CD8-positive, alpha-beta T cell (primary cell): ENCODE measurements at regions of chr7 and their contacts with region 1.

Region 1: GRCh38 chr7:87574630-87575029 is 26.1 kb downstream of the ABCB1 start:
- DNase-seq: no peak
- ATAC-seq: no peak
- H3K4me3 ChIP-seq: no peak overlapping the region
- H3K4me3 Mint-ChIP-seq: no peak overlapping the region
- H3K27ac ChIP-seq: no peak overlapping the region
- H3K27ac Mint-ChIP-seq: no peak overlapping the region
- H3K4me1 ChIP-seq: no peaks in the 10 kb centered on the region
- H3K4me1 Mint-ChIP-seq: peaks cover 15% of the 10 kb centered on the region
- H3K27me3 ChIP-seq: no peaks in the 10 kb centered on the region
- H3K27me3 Mint-ChIP-seq: no peaks in the 10 kb centered on the region
- CTCF ChIP-seq: no peak

Region 2: DNA sequence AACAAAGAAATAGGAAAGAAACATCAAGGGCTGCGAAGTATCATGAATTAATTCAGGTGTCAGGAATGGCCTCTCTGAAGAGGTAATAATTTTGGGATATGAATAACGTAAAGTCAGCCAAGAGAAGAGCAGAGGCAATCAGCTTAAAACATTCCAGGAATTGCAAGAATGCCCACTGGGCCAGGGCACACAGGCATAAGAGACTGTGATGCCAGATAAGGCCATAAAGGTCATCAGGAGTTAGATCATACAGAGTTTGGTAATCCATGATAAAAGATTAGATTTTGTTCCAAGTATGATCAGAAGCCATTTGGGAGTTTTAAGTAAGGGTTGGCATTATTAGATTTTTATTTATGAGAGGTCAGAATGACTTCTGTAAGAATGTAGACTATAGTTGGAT is 45.9 kb before region 1 on chr7:
- CTCF ChIA-PET with region 1: no interaction called
- POLR2A ChIA-PET with region 1: no interaction called
- intact Hi-C with region 1: no loop called
- DNase-seq: no peak
- ATAC-seq: no peak
- H3K4me3 ChIP-seq: no peak overlapping the region
- H3K4me3 Mint-ChIP-seq: no peak overlapping the region
- H3K27ac ChIP-seq: no peak overlapping the region
- H3K27ac Mint-ChIP-seq: no peak overlapping the region
- H3K4me1 ChIP-seq: no peaks in the 10 kb centered on the region
- H3K4me1 Mint-ChIP-seq: no peaks in the 10 kb centered on the region
- H3K27me3 ChIP-seq: no peaks in the 10 kb centered on the region
- H3K27me3 Mint-ChIP-seq: no peaks in the 10 kb centered on the region
- CTCF ChIP-seq: no peak

Region 3: GRCh38 chr7:87590578-87590977 is 15.9 kb after region 1 on chr7:
- CTCF ChIA-PET with region 1: no interaction called
- POLR2A ChIA-PET with region 1: no interaction called
- intact Hi-C with region 1: loop called in 1 of 2 experiments (anchors 1 kb)
- DNase-seq: peak in 2 of 9 experiments; percentile 31 to 43
- ATAC-seq: peak; percentile 57
- H3K4me3 ChIP-seq: no peak overlapping the region
- H3K4me3 Mint-ChIP-seq: no peak overlapping the region
- H3K27ac ChIP-seq: peak overlapping the region in 1 of 2 experiments; percentile 22
- H3K27ac Mint-ChIP-seq: no peak overlapping the region
- H3K4me1 ChIP-seq: peaks cover 41% of the 10 kb centered on the region
- H3K4me1 Mint-ChIP-seq: peaks cover 34% of the 10 kb centered on the region
- H3K27me3 ChIP-seq: no peaks in the 10 kb centered on the region
- H3K27me3 Mint-ChIP-seq: no peaks in the 10 kb centered on the region
- CTCF ChIP-seq: no peak